Activated naive CD4-positive, alpha-beta T cell treated with anti-CD3 and anti-CD28 coated beads for 36 hours (primary cell): ENCODE measurements at regions of chr21 and their contacts with region 1.

Region 1: GRCh38 chr21:39445321-39446269 is at the start of gene LCA5L:
- DNase-seq: peak; percentile 86
- H3K4me3 Mint-ChIP-seq: peak within 1 kb of the TSS; percentile 95
- H3K27ac Mint-ChIP-seq: peak within 1 kb of the TSS; percentile 94
- H3K4me1 Mint-ChIP-seq: peaks cover 23% of the 10 kb centered on the region
- H3K27me3 Mint-ChIP-seq: peaks cover 9% of the 10 kb centered on the region
- total RNA-seq, gene LCA5L: 0.26 TPM in 1 of 2 experiments, not detected in the other

Region 2: GRCh38 chr21:39183237-39184007 is 262.2 kb before region 1 on chr21 and contains the start of gene PSMG1:
- CTCF ChIA-PET with region 1: no interaction called
- intact Hi-C with region 1: loop called (anchors 1 kb)
- DNase-seq: peak; percentile 94
- H3K4me3 Mint-ChIP-seq: peak within 1 kb of the TSS; percentile 92
- H3K27ac Mint-ChIP-seq: peak within 1 kb of the TSS; percentile 90
- H3K4me1 Mint-ChIP-seq: peaks cover 62% of the 10 kb centered on the region
- H3K27me3 Mint-ChIP-seq: no peaks in the 10 kb centered on the region
- total RNA-seq, gene PSMG1: 70.8 to 70.9 TPM

Region 3: DNA sequence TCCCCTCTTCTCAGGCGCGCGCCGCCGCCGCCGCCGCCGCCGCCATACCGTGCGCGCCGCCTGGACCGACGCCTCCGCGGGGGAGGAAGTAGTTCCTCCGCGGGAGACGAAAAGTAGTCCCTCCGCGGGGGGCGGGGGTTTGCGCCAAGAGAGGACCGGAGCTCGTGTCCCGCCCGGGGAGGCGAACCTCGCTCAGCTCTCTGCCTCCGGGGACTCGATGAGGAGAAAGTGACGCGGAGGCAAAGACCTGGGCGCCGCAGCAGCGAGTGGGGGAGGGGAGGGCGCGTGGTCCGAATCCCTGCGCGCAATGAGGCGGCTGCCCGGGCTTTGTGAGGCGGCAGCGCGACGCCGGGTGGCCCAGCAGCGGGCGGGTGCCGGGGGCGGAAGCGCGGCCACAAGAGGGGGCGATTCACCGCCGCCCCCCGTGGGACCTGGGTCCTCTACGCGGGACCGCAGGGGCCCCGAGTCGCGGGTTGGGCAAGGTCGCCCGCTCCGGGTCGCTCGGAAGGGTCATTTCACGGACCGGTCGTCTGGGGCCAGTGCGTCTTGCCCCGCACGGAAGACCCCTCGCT is 131.9 kb before region 1 on chr21 and contains the start of gene BRWD1:
- CTCF ChIA-PET with region 1: no interaction called
- intact Hi-C with region 1: loop called (anchors 1 kb)
- DNase-seq: peak; percentile 75
- H3K4me3 Mint-ChIP-seq: peak within 1 kb of the TSS; percentile 93
- H3K27ac Mint-ChIP-seq: peak within 1 kb of the TSS; percentile 97
- H3K4me1 Mint-ChIP-seq: peaks cover 42% of the 10 kb centered on the region
- H3K27me3 Mint-ChIP-seq: no peaks in the 10 kb centered on the region
- total RNA-seq, gene BRWD1: 23.0 to 24.5 TPM

Region 4: GRCh38 chr21:39349211-39350093 is 96.1 kb before region 1 on chr21:
- CTCF ChIA-PET with region 1: interaction called, 7 read pairs
- intact Hi-C with region 1: loop called (anchors 1 kb)
- DNase-seq: peak; percentile 98
- H3K4me3 Mint-ChIP-seq: peak overlapping the region; percentile 99
- H3K27ac Mint-ChIP-seq: peak overlapping the region; percentile 99
- H3K4me1 Mint-ChIP-seq: peaks cover 32% of the 10 kb centered on the region
- H3K27me3 Mint-ChIP-seq: no peaks in the 10 kb centered on the region

Region 5: DNA sequence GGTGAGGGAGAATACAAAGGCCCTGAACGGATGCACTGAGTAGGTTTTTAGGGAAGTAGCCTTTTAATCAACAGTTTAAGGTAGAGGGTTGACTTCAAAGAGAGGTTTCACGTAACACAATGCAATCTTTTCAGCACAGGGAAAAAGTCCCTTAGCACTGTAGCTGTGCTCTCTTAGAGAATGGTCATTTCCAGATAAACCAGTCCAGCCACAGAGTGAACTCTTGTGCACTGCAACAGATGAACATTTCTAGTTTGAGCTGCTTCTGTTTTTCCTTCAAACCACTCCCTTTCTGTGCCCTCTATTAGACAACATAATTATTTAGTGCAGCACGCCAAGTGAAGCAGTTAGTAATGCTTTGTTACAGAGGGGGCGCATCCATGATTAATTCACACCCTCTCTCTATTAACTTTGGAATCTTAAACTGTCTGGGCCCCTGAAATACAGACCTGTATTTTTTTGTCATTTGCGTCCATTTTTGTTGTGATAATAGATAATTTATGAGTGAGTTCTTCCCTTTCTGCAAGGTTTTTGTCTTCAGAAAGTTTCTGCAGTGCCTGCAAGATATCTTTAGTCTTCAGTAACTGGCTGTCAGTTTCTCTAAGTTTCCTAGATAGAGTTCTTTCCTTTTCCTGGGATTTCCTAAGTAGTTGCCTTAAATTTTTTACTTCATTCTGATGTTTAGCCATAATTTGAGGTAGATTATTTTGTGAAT is 22.9 kb before region 1 on chr21:
- CTCF ChIA-PET with region 1: interaction called, 14 read pairs
- intact Hi-C with region 1: no loop called
- DNase-seq: no peak
- H3K4me3 Mint-ChIP-seq: no peak overlapping the region
- H3K27ac Mint-ChIP-seq: no peak overlapping the region
- H3K4me1 Mint-ChIP-seq: no peaks in the 10 kb centered on the region
- H3K27me3 Mint-ChIP-seq: no peaks in the 10 kb centered on the region

Region 6: DNA sequence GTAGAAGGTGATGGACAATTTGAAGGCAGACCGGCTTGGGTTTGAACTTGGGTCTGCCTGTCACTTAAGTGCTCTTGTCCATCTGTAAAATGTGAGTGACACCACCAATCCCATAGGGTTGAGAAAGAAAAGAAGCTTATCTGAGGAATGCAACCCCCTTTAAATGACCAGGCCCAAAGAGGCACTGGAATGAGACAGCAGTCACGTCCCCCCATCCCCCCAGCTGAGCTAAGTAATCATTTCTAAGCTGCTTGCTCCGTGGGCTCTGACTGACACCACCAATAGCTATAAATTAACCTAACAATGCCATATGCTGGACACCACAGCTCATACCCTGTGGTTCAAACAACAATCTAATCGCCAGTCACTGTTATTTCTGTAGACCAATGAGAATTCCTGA is 15.1 kb before region 1 on chr21:
- CTCF ChIA-PET with region 1: interaction called, 14 read pairs
- intact Hi-C with region 1: no loop called
- DNase-seq: no peak
- H3K4me3 Mint-ChIP-seq: no peak overlapping the region
- H3K27ac Mint-ChIP-seq: no peak overlapping the region
- H3K4me1 Mint-ChIP-seq: no peaks in the 10 kb centered on the region
- H3K27me3 Mint-ChIP-seq: peaks cover 3% of the 10 kb centered on the region